ENCODE measurements at regions of chr10 and their contacts with region 1.

Region 1: DNA sequence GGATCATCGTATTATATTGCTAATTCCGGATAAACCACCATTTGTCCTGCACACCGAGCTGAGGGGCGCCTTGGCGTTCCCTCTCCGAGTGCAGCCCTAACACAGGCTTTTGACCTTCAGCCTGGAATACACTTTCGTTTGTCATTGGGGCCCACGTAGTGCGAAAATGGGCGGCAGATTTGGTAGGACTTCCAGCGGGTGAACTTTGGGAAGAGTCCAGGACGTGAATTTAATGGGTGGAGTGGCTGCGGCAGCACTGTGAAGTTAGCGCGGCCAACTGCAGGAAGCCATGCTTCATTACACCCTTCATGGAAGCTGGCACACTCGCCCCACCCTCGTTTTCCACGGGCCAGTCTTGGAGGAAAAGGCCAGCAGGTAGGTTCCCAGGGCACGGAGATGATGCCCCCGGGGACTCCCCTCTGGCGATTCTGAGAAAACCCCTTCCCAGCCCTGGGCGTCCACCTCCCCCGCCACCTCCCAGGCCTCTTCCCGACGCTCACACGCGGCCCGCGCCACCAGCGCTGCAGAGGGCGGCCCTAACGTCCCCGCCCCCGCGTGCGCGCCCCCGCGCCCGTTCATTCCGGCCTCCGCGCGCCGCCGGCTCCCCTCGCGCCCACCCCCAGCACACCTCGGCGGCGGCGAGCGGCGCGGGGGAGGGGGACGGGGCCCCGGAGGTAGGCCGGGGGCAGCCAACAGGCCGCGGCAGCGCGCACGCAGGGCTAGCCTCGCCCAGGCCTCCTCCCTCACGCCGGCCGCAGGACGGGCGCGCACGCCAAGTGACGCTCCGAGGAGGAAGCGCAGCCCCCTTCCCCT is at the start of gene MLLT10:
- DNase-seq: peak; percentile 96
- H3K4me3 ChIP-seq: peak within 1 kb of the TSS; percentile 84 to 93
- H3K27ac ChIP-seq: peak within 1 kb of the TSS; percentile 97 to 100
- H3K4me1 ChIP-seq: peaks cover 15% of the 10 kb centered on the region
- H3K27me3 ChIP-seq: no peaks in the 10 kb centered on the region
- CTCF ChIP-seq: peak in 1 of 3 experiments; percentile 30
- POLR2A ChIP-seq: no peak
- total RNA-seq, gene MLLT10: 130 to 144 TPM

Region 2: GRCh38 chr10:22042557-22043326 is 509.1 kb after region 1 on chr10:
- intact Hi-C with region 1: no loop called
- DNase-seq: no peak
- H3K4me3 ChIP-seq: no peak overlapping the region
- H3K27ac ChIP-seq: no peak overlapping the region
- H3K4me1 ChIP-seq: no peaks in the 10 kb centered on the region
- H3K27me3 ChIP-seq: no peaks in the 10 kb centered on the region
- CTCF ChIP-seq: no peak
- POLR2A ChIP-seq: no peak

Region 3: GRCh38 chr10:22251751-22252223 is 718.1 kb after region 1 on chr10:
- intact Hi-C with region 1: loop called (anchors 10 kb)
- DNase-seq: peak; percentile 83
- H3K4me3 ChIP-seq: peak overlapping the region; percentile 73 to 83
- H3K27ac ChIP-seq: peak overlapping the region; percentile 99
- H3K4me1 ChIP-seq: peaks cover 7% of the 10 kb centered on the region
- H3K27me3 ChIP-seq: no peaks in the 10 kb centered on the region
- CTCF ChIP-seq: no peak
- POLR2A ChIP-seq: no peak